Mammary epithelial cell (primary cell): ENCODE measurements at regions of chr18 and their contacts with region 1.

Region 1: GRCh38 chr18:74495581-74496507 is at the start of gene CNDP2:
- DNase-seq: peak; percentile 98
- H3K4me3 ChIP-seq: peak within 1 kb of the TSS; percentile 78 to 97 (median 89)
- H3K27ac ChIP-seq: peak within 1 kb of the TSS; percentile 82
- H3K4me1 ChIP-seq: peaks cover 26% of the 10 kb centered on the region
- H3K27me3 ChIP-seq: no peaks in the 10 kb centered on the region
- CTCF ChIP-seq: no peak
- total RNA-seq, gene CNDP2: 130 to 159 TPM

Region 2: GRCh38 chr18:74342416-74343043 is 153.3 kb before region 1 on chr18:
- CTCF ChIA-PET with region 1: interaction called, 3 read pairs
- dilution Hi-C with region 1: no loop called
- in situ Hi-C with region 1: loop called in 1 of 2 experiments (anchors 10 kb)
- intact Hi-C with region 1: no loop called
- DNase-seq: peak; percentile 26
- H3K4me3 ChIP-seq: no peak overlapping the region
- H3K27ac ChIP-seq: no peak overlapping the region
- H3K4me1 ChIP-seq: no peaks in the 10 kb centered on the region
- H3K27me3 ChIP-seq: no peaks in the 10 kb centered on the region
- CTCF ChIP-seq: peak; percentile 43 to 61

Region 3: GRCh38 chr18:74353169-74353775 is 142.6 kb before region 1 on chr18:
- CTCF ChIA-PET with region 1: interaction called, 34 read pairs
- dilution Hi-C with region 1: no loop called
- in situ Hi-C with region 1: loop called in 1 of 2 experiments (anchors 10 kb)
- intact Hi-C with region 1: loop called (anchors 1 kb)
- DNase-seq: peak; percentile 51
- H3K4me3 ChIP-seq: no peak overlapping the region
- H3K27ac ChIP-seq: no peak overlapping the region
- H3K4me1 ChIP-seq: peaks cover 8% of the 10 kb centered on the region
- H3K27me3 ChIP-seq: peaks cover 4% of the 10 kb centered on the region
- CTCF ChIP-seq: peak; percentile 72 to 85

Region 4: GRCh38 chr18:74430811-74431571 is 64.9 kb before region 1 on chr18:
- CTCF ChIA-PET with region 1: no interaction called
- dilution Hi-C with region 1: no loop called
- in situ Hi-C with region 1: no loop called
- intact Hi-C with region 1: no loop called
- DNase-seq: no peak
- H3K4me3 ChIP-seq: no peak overlapping the region
- H3K27ac ChIP-seq: no peak overlapping the region
- H3K4me1 ChIP-seq: no peaks in the 10 kb centered on the region
- H3K27me3 ChIP-seq: no peaks in the 10 kb centered on the region
- CTCF ChIP-seq: no peak

Region 5: DNA sequence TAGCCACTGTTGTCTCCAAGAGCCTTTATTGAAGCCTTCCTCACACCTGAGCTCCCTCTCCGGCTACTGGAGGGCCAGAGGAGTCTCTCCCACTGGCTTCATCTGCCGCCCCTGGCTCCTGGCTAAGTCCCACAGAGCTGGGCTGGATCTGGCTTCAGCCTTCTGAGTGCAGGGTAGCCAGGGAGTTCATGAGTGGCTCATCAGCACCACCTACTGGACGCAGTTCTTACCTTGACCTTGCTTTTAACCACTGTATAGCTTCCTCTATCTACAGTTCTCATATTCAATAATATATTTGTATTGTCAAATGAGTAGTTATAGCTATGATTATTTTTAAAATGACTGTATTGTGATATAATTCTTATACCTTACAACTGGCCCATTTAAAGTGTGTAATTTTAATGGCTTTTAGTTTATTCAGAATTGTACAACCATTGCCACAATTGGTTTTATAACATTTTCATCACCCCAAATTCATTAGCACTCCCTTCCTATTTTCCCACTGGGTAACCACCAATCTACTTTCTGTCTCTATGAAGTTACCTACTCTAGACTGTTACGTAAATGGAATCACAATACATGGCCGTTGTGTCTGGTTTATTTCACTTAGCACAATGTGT is 56.2 kb after region 1 on chr18:
- CTCF ChIA-PET with region 1: no interaction called
- dilution Hi-C with region 1: no loop called
- in situ Hi-C with region 1: no loop called
- intact Hi-C with region 1: loop called (anchors 2 kb)
- DNase-seq: peak; percentile 58
- H3K4me3 ChIP-seq: no peak overlapping the region
- H3K27ac ChIP-seq: no peak overlapping the region
- H3K4me1 ChIP-seq: no peaks in the 10 kb centered on the region
- H3K27me3 ChIP-seq: no peaks in the 10 kb centered on the region
- CTCF ChIP-seq: peak; percentile 70 to 87

Region 6: GRCh38 chr18:74597662-74598349 is 102.0 kb after region 1 on chr18 and contains the start of gene ZNF407:
- CTCF ChIA-PET with region 1: interaction called, 3 read pairs
- dilution Hi-C with region 1: no loop called
- in situ Hi-C with region 1: no loop called
- intact Hi-C with region 1: loop called (anchors 2 kb)
- DNase-seq: peak; percentile 91
- H3K4me3 ChIP-seq: peak within 1 kb of the TSS; percentile 92 to 98 (median 92)
- H3K27ac ChIP-seq: peak within 1 kb of the TSS; percentile 94
- H3K4me1 ChIP-seq: peaks cover 14% of the 10 kb centered on the region
- H3K27me3 ChIP-seq: no peaks in the 10 kb centered on the region
- CTCF ChIP-seq: no peak
- total RNA-seq, gene ZNF407: 10.8 to 12.8 TPM